Activated CD4-positive, alpha-beta memory T cell treated with anti-CD3 and anti-CD28 coated beads, Interleukin-2, amount 10 ng/mL, durations not matched to agents 7 days and 5 days (primary cell): ENCODE measurements at regions of chr6 and their contacts with region 1.

Region 1: DNA sequence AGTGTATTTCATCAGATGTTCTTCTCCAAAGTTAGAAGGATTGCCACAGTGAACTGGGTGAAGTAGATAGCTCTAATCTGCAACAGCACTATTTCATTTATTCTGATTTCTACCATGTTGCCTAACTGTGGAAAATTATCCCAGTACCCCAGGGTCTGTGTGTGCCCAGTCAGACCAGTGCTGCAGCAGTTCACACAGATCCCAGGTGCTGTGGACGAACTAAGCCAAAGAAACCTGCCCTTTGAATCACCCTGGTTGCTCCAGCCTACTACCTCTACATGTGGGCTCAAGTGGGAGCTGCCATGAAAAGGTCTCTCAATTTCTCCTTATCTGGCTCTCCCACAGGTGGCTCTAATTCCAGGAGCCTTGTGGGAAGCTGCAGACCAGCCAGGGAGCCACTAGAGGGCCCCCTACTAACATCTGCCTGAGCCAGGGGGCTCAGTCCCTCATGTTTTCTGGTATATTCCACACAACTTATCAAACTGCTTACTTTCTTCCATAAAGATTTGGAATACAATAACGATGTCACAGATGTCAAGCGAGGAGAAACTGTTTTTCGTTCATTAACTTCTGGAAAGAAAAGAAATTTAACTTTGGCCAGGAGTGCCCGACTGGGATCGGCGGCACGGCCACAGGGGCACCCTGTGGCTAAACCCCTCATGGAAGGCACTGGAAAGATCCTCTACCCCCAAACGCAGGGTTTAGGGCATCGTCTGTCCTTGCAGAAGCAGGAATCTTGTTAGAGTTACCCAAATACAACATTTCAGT is 31.6 kb upstream of the LY86 start:
- DNase-seq: peak; percentile 53
- H3K4me3 Mint-ChIP-seq: no peak overlapping the region
- H3K27ac Mint-ChIP-seq: no peak overlapping the region
- H3K4me1 Mint-ChIP-seq: peaks cover 43% of the 10 kb centered on the region
- H3K27me3 Mint-ChIP-seq: peaks cover 48% of the 10 kb centered on the region

Region 2: GRCh38 chr6:6505111-6505510 is 51.8 kb before region 1 on chr6:
- CTCF ChIA-PET with region 1: no interaction called
- POLR2A ChIA-PET with region 1: no interaction called
- DNase-seq: no peak
- H3K4me3 Mint-ChIP-seq: no peak overlapping the region
- H3K27ac Mint-ChIP-seq: no peak overlapping the region
- H3K4me1 Mint-ChIP-seq: no peaks in the 10 kb centered on the region
- H3K27me3 Mint-ChIP-seq: peaks cover 61% of the 10 kb centered on the region

Region 3: DNA sequence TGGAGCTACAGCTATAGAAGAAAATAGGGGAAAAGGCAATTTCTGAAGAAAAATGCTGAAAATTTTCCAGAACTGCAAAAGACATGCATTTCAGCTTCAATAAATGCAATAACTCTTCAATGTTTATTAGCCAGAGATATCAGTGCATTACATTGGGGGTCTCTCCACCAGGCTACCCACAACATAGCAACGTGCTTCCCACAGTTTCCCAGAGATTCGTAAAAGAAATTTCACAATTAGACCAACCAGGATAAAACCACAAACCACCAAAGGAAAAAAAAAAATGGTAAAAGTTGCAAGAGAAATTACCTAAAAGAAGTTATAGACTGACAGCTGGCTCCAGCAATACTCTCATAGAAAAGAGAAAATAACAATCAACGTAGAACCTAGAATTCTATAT is 47.6 kb after region 1 on chr6:
- CTCF ChIA-PET with region 1: interaction called, 13 read pairs
- POLR2A ChIA-PET with region 1: no interaction called
- DNase-seq: no peak
- H3K4me3 Mint-ChIP-seq: no peak overlapping the region
- H3K27ac Mint-ChIP-seq: no peak overlapping the region
- H3K4me1 Mint-ChIP-seq: peaks cover 14% of the 10 kb centered on the region
- H3K27me3 Mint-ChIP-seq: peaks cover 4% of the 10 kb centered on the region